Right cardiac atrium (tissue), 5 donors: ENCODE measurements at regions of chr13 and their contacts with region 1.

Region 1: DNA sequence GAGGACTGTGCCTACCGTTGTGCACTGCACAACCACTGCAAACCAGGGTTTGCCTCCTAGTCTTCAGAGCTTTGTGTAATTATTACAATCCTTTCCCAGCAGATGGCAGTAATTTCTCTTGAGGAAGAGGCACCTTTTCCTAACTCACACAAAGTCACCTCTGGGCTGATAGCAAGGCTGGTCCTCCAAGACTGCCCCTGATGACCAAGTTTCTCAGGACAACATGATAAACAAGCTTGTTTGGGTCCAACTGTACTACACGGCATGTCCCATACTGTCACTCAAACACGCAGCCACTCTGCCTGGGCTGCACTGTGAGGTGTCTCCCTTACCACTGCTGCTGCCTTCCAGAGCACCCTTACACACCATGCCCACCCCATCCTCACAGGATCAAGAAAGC is 39.3 kb downstream of the RFXAP start:
- DNase-seq: no peak
- ATAC-seq: peak; percentile 65 to 67
- H3K4me3 ChIP-seq: no peak overlapping the region
- H3K27ac ChIP-seq: no peak overlapping the region
- H3K4me1 ChIP-seq: no peaks in the 10 kb centered on the region
- H3K27me3 ChIP-seq: no peaks in the 10 kb centered on the region

Region 2: GRCh38 chr13:36724141-36724540 is 134.1 kb before region 1 on chr13:
- intact Hi-C with region 1: no loop called
- DNase-seq: no peak
- ATAC-seq: no peak
- H3K4me3 ChIP-seq: no peak overlapping the region
- H3K27ac ChIP-seq: no peak overlapping the region
- H3K4me1 ChIP-seq: no peaks in the 10 kb centered on the region
- H3K27me3 ChIP-seq: no peaks in the 10 kb centered on the region

Region 3: DNA sequence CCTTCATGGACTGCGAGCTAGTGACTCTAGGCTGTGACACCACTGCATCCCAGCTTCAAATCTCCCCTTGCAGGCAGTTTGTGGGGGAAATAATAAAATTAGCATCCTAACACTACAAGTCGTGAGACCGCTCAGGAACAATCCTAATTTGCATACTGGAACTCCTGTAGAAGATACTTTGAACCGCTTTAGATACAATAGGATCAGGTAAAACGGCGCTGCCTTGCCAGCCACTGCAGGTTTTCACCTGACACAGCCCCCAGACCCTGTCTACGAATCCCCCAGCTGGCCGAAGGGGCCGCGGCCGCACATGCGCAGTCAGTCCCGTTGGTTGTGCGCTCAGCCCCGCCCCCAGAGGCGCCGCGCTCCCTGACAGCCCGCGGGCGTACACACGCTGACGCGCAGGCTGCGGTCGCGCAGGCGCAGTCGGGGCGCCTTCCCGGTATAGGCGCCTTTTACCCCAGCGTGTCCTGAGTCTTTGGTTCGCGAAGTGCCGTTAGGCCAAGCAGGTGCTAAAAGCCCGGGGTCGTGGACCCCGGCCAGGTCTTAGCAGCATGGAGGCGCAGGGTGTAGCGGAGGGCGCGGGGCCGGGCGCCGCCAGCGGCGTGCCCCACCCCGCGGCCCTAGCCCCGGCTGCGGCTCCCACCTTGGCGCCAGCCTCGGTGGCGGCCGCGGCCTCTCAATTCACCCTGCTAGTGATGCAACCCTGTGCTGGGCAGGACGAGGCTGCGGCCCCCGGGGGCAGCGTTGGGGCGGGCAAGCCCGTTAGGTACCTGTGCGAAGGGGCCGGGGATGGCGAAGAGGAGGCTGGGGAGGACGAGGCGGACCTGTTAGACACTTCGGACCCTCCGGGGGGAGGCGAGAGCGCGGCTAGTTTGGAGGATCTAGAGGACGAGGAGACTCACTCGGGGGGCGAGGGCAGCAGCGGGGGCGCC is 39.2 kb before region 1 on chr13 and contains the start of gene RFXAP:
- intact Hi-C with region 1: no loop called
- DNase-seq: peak; percentile 95 to 98 (median 97)
- ATAC-seq: peak; percentile 98 to 99
- H3K4me3 ChIP-seq: peak within 1 kb of the TSS; percentile 85
- H3K27ac ChIP-seq: peak within 1 kb of the TSS; percentile 5
- H3K4me1 ChIP-seq: peaks cover 4% of the 10 kb centered on the region
- H3K27me3 ChIP-seq: no peaks in the 10 kb centered on the region
- total RNA-seq, gene RFXAP: 2.9 to 4.6 (median 4.1) TPM

Region 4: DNA sequence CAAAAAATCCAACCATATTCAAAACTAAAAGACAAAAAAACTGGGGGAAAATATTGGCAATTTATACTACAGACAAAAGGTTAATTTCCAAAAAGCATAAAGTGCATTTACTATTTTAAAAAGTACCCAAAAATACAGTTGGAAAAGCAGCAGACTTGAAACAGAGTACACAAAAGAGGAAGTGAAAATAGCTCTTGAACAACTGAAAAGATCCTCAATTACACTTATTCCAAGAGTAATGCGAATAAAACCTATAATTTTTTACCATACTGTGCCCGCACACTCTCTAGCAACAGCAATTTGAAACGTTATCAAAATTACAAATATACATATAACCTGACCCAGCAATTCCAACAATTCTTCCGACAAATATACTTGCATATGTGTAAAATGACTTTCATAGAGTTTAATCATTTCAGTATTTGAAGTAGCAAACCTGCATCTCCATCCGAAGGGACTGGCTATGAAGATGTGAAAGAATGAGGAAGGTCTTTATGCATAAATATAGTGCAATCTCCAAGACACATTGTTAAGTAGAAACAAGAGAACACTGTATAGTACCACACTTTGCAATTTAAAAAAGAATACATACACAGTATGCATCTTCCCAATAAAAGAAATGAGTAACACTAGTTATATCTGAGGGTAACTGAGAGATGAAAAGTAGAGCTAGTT is 115.5 kb after region 1 on chr13:
- intact Hi-C with region 1: loop called in 1 of 4 experiments (anchors 10 kb)
- DNase-seq: no peak
- ATAC-seq: no peak
- H3K4me3 ChIP-seq: no peak overlapping the region
- H3K27ac ChIP-seq: no peak overlapping the region
- H3K4me1 ChIP-seq: no peaks in the 10 kb centered on the region
- H3K27me3 ChIP-seq: no peaks in the 10 kb centered on the region

Region 5: DNA sequence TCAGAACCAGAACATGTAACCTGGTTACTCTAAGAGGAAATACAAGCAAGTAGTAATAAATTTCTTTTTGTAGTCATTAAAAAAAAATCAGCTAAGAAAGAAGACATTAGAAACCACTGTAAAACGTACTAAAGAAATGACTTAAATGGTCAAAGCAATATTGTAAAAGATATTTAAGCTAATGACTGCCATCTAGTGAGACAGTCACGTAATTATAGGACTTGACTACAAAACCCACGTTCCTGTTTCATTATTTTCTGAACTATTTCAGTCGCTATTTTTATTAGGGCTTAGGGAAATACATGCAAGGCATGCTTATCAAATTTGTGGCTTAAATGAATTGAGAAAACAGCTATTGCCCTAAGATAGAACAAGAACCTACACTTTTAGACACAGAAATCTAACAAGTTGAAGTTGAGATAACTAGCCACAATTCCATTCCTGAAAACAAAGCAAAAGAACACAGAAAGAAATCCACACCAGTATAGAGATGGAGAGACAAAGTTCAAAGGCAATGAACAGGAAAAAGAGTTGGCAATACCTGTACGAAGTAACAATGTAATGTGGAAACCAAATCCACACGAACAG is 123.0 kb after region 1 on chr13:
- intact Hi-C with region 1: loop called (anchors 2 to 10 kb)
- DNase-seq: no peak
- ATAC-seq: peak in 1 of 2 donors; percentile 50
- H3K4me3 ChIP-seq: no peak overlapping the region
- H3K27ac ChIP-seq: no peak overlapping the region
- H3K4me1 ChIP-seq: no peaks in the 10 kb centered on the region
- H3K27me3 ChIP-seq: no peaks in the 10 kb centered on the region